ENCODE measurements at regions of chr5 and their contacts with region 1.

Region 1: GRCh38 chr5:53151713-53152458 is 42.3 kb upstream of the MOCS2 start:
- DNase-seq: no peak
- H3K4me3 ChIP-seq: no peak overlapping the region
- H3K27ac ChIP-seq: no peak overlapping the region
- H3K4me1 ChIP-seq: no peaks in the 10 kb centered on the region
- H3K27me3 ChIP-seq: no peaks in the 10 kb centered on the region
- CTCF ChIP-seq: no peak

Region 2: DNA sequence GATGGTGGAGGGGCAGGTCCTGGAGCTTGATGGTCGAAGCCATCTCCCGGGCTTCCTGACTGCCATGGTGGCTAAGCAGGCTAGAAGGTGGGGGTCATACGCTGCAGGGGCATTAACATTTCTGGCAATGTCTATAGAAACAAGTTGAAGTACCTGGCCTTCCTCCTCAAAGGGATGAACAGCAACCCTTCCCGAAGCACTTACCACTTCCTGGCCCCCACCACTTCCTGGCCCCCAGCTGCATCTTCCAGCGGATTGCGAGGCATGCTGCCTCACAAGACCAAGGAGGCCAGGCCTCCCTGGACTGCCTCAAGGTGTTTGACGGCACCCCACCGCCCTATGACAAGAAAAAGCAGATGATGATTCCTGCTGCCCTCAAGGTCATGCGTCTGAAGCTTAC is 54.7 kb after region 1 on chr5:
- CTCF ChIA-PET with region 1: no interaction called
- POLR2A ChIA-PET with region 1: no interaction called
- intact Hi-C with region 1: loop called (anchors 2 kb)
- DNase-seq: no peak
- H3K4me3 ChIP-seq: no peak overlapping the region
- H3K27ac ChIP-seq: no peak overlapping the region
- H3K4me1 ChIP-seq: no peaks in the 10 kb centered on the region
- H3K27me3 ChIP-seq: no peaks in the 10 kb centered on the region
- CTCF ChIP-seq: no peak

Measured in PC-9 (cell line).